ENCODE measurements at regions of chr4 and their contacts with region 1.

Region 1: DNA sequence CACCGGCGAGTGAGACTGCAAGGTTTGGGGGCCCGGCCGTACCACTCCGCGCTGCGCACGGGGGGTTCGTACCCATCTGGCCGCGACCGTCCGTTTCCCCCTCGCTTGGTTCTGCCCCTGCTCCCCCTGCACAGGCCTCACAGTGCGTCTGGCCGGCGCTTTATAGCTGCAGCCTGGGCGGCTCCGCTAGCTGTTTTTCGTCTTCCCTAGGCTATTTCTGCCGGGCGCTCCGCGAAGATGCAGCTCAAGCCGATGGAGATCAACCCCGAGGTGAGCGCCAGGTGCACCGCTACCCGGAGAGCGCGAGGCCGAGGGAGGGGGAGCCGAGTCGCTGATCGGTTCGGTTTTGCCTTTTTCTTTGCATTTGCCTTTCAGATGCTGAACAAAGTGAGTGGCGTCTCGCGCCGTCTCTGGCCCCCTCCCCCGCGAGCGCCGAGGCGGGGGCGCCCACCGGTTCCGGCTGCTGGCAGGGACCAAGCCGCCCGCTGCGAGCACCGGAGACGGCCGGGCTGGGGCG is at the start of gene UCHL1:
- DNase-seq: no peak
- H3K4me3 Mint-ChIP-seq: peak within 1 kb of the TSS; percentile 61
- H3K27ac Mint-ChIP-seq: no peak within 1 kb of the TSS
- H3K4me1 Mint-ChIP-seq: peaks cover 6% of the 10 kb centered on the region
- H3K27me3 Mint-ChIP-seq: peaks cover 12% of the 10 kb centered on the region
- CTCF ChIP-seq: no peak
- total RNA-seq, gene UCHL1: 1.3 and 1.4 TPM in 2 replicates

Region 2: DNA sequence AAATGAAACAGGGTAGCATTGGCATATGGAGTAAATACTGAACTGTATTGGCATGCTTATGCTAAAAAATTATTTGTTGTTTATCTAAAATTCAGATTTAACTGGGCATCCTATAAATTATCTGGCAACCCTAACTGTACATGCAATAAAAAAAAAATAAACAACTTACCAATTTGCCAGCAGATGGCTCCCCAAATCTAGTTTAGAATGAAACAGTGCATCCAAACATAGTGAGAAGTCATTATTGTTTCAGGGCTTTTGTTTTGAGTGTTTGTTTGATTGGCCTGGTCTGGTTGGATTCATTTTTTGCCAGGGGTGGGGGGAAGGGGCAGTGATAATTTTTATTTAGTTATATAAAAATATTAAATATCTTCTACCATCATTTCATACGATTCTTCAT is 519.9 kb before region 1 on chr4:
- CTCF ChIA-PET with region 1: no interaction called
- POLR2A ChIA-PET with region 1: no interaction called
- intact Hi-C with region 1: loop called (anchors 10 kb)
- DNase-seq: peak; percentile 52
- H3K4me3 Mint-ChIP-seq: no peak overlapping the region
- H3K27ac Mint-ChIP-seq: no peak overlapping the region
- H3K4me1 Mint-ChIP-seq: peaks cover 6% of the 10 kb centered on the region
- H3K27me3 Mint-ChIP-seq: no peaks in the 10 kb centered on the region
- CTCF ChIP-seq: peak; percentile 39

Region 3: GRCh38 chr4:41318867-41319535 is 62.2 kb after region 1 on chr4:
- CTCF ChIA-PET with region 1: no interaction called
- POLR2A ChIA-PET with region 1: no interaction called
- intact Hi-C with region 1: no loop called
- DNase-seq: peak; percentile 38
- H3K4me3 Mint-ChIP-seq: no peak overlapping the region
- H3K27ac Mint-ChIP-seq: peak overlapping the region; percentile 5
- H3K4me1 Mint-ChIP-seq: peaks cover 18% of the 10 kb centered on the region
- H3K27me3 Mint-ChIP-seq: no peaks in the 10 kb centered on the region
- CTCF ChIP-seq: no peak

Region 4: GRCh38 chr4:41887821-41888686 is 631.3 kb after region 1 on chr4:
- CTCF ChIA-PET with region 1: interaction called, 4 read pairs
- POLR2A ChIA-PET with region 1: no interaction called
- intact Hi-C with region 1: loop called (anchors 5 kb)
- DNase-seq: peak; percentile 62
- H3K4me3 Mint-ChIP-seq: no peak overlapping the region
- H3K27ac Mint-ChIP-seq: peak overlapping the region; percentile 57
- H3K4me1 Mint-ChIP-seq: peaks cover 15% of the 10 kb centered on the region
- H3K27me3 Mint-ChIP-seq: no peaks in the 10 kb centered on the region
- CTCF ChIP-seq: peak; percentile 72

Measured in MCF 10A (cell line).